ENCODE measurements at regions of chr2 and their contacts with region 1.

Region 1: GRCh38 chr2:170815746-170816503 is 762 bp upstream of the GAD1 start:
- DNase-seq: peak; percentile 80
- ATAC-seq: peak; percentile 49
- H3K4me3 Mint-ChIP-seq: peak overlapping the region; percentile 66
- H3K27ac Mint-ChIP-seq: peak overlapping the region; percentile 42
- H3K4me1 Mint-ChIP-seq: peaks cover 45% of the 10 kb centered on the region
- H3K27me3 Mint-ChIP-seq: peaks cover 70% of the 10 kb centered on the region
- CTCF ChIP-seq: peak; percentile 94

Region 2: GRCh38 chr2:170235860-170236679 is 579.9 kb before region 1 on chr2:
- CTCF ChIA-PET with region 1: interaction called, 18 read pairs
- POLR2A ChIA-PET with region 1: no interaction called
- intact Hi-C with region 1: no loop called
- DNase-seq: peak; percentile 46
- ATAC-seq: peak; percentile 78
- H3K4me3 Mint-ChIP-seq: no peak overlapping the region
- H3K27ac Mint-ChIP-seq: no peak overlapping the region
- H3K4me1 Mint-ChIP-seq: no peaks in the 10 kb centered on the region
- H3K27me3 Mint-ChIP-seq: peaks cover 13% of the 10 kb centered on the region
- CTCF ChIP-seq: peak; percentile 72

Region 3: GRCh38 chr2:170361090-170361936 is 454.6 kb before region 1 on chr2:
- CTCF ChIA-PET with region 1: interaction called, 67 read pairs
- POLR2A ChIA-PET with region 1: no interaction called
- intact Hi-C with region 1: loop called (anchors 2 kb)
- DNase-seq: peak; percentile 77
- ATAC-seq: peak; percentile 59
- H3K4me3 Mint-ChIP-seq: peak overlapping the region; percentile 20
- H3K27ac Mint-ChIP-seq: peak overlapping the region; percentile 53
- H3K4me1 Mint-ChIP-seq: peaks cover 25% of the 10 kb centered on the region
- H3K27me3 Mint-ChIP-seq: peaks cover 13% of the 10 kb centered on the region
- CTCF ChIP-seq: peak; percentile 66

Region 4: DNA sequence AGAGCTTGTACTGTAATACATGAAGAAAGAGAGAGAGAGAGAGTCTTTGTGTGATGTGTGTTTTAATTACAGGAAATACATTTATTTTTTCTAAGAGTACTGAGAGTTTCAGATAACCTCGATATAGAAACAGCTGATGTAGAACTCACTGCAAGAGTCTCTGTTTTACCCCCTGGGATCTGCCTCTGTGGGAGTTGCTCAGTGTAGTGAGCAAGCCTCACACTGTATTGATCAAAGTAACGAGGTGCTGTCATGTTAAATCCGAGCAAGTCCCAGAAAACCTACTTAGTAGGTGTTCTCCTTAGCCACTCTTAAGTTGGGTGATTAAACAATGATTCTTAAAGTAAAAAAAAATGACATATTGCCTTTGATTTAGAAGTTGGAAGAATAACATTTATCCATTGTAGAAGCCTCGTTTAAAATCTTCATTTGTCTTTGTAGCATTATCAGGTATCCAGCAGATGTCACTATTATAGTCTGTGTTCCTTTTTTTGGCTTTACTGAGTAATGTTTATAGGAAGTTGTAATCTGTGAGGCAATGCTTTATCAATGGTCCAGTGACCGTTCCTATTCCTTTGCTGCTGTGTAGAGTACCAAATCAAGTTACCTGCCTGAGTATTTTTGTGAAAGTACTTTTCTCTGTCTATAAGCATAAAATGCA is 419.0 kb before region 1 on chr2:
- CTCF ChIA-PET with region 1: interaction called, 10 read pairs
- POLR2A ChIA-PET with region 1: no interaction called
- intact Hi-C with region 1: no loop called
- DNase-seq: no peak
- ATAC-seq: no peak
- H3K4me3 Mint-ChIP-seq: no peak overlapping the region
- H3K27ac Mint-ChIP-seq: no peak overlapping the region
- H3K4me1 Mint-ChIP-seq: no peaks in the 10 kb centered on the region
- H3K27me3 Mint-ChIP-seq: peaks cover 26% of the 10 kb centered on the region
- CTCF ChIP-seq: no peak

Region 5: DNA sequence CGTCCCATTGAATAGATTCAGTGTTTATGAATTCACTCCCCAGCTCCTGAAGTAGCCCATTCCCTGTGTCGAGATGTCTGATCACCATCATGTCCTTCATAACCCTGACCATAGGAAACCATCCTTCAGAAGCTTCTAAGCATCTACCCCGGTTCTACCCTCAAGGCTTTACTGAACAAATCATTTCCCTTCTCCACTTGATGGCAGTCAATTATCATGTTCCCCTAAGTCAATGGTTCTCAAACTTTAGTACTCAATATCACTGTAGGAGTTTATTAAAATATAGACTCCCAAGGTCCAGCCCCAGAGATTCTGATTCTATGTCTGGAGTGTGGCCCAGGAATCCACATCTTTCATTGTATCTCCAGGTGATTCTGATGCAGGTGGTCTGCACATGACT is 329.2 kb before region 1 on chr2:
- CTCF ChIA-PET with region 1: interaction called, 6 read pairs
- POLR2A ChIA-PET with region 1: no interaction called
- intact Hi-C with region 1: loop called (anchors 10 kb)
- DNase-seq: no peak
- ATAC-seq: no peak
- H3K4me3 Mint-ChIP-seq: no peak overlapping the region
- H3K27ac Mint-ChIP-seq: no peak overlapping the region
- H3K4me1 Mint-ChIP-seq: no peaks in the 10 kb centered on the region
- H3K27me3 Mint-ChIP-seq: no peaks in the 10 kb centered on the region
- CTCF ChIP-seq: no peak

Region 6: GRCh38 chr2:170770606-170771420 is 45.1 kb before region 1 on chr2:
- CTCF ChIA-PET with region 1: interaction called, 11 read pairs
- POLR2A ChIA-PET with region 1: no interaction called
- intact Hi-C with region 1: no loop called
- DNase-seq: peak; percentile 77
- ATAC-seq: peak; percentile 90
- H3K4me3 Mint-ChIP-seq: peak overlapping the region; percentile 76
- H3K27ac Mint-ChIP-seq: peak overlapping the region; percentile 44
- H3K4me1 Mint-ChIP-seq: peaks cover 12% of the 10 kb centered on the region
- H3K27me3 Mint-ChIP-seq: peaks cover 21% of the 10 kb centered on the region
- CTCF ChIP-seq: no peak

Region 7: GRCh38 chr2:170873035-170873692 is 57.2 kb after region 1 on chr2:
- CTCF ChIA-PET with region 1: interaction called, 17 read pairs
- POLR2A ChIA-PET with region 1: no interaction called
- intact Hi-C with region 1: no loop called
- DNase-seq: peak; percentile 86
- ATAC-seq: peak; percentile 98
- H3K4me3 Mint-ChIP-seq: peak overlapping the region; percentile 49
- H3K27ac Mint-ChIP-seq: peak overlapping the region; percentile 60
- H3K4me1 Mint-ChIP-seq: peaks cover 10% of the 10 kb centered on the region
- H3K27me3 Mint-ChIP-seq: peaks cover 3% of the 10 kb centered on the region
- CTCF ChIP-seq: peak; percentile 95

Region 8: GRCh38 chr2:170895023-170895757 is 79.3 kb after region 1 on chr2:
- CTCF ChIA-PET with region 1: no interaction called
- POLR2A ChIA-PET with region 1: no interaction called
- intact Hi-C with region 1: no loop called
- DNase-seq: no peak
- ATAC-seq: no peak
- H3K4me3 Mint-ChIP-seq: no peak overlapping the region
- H3K27ac Mint-ChIP-seq: no peak overlapping the region
- H3K4me1 Mint-ChIP-seq: no peaks in the 10 kb centered on the region
- H3K27me3 Mint-ChIP-seq: peaks cover 9% of the 10 kb centered on the region
- CTCF ChIP-seq: no peak

Measured in activated CD8-positive, alpha-beta T cell treated with anti-CD3 and anti-CD28 coated beads for 36 hours (primary cell).